Right ventricle myocardium inferior (tissue), 1 donor: ENCODE measurements at regions of chr10 and their contacts with region 1.

Region 1: GRCh38 chr10:68901104-68901927 is at the start of gene DDX50:
- DNase-seq: peak; percentile 97
- ATAC-seq: peak; percentile 99
- total RNA-seq, gene DDX50: 21.5 TPM

Region 2: DNA sequence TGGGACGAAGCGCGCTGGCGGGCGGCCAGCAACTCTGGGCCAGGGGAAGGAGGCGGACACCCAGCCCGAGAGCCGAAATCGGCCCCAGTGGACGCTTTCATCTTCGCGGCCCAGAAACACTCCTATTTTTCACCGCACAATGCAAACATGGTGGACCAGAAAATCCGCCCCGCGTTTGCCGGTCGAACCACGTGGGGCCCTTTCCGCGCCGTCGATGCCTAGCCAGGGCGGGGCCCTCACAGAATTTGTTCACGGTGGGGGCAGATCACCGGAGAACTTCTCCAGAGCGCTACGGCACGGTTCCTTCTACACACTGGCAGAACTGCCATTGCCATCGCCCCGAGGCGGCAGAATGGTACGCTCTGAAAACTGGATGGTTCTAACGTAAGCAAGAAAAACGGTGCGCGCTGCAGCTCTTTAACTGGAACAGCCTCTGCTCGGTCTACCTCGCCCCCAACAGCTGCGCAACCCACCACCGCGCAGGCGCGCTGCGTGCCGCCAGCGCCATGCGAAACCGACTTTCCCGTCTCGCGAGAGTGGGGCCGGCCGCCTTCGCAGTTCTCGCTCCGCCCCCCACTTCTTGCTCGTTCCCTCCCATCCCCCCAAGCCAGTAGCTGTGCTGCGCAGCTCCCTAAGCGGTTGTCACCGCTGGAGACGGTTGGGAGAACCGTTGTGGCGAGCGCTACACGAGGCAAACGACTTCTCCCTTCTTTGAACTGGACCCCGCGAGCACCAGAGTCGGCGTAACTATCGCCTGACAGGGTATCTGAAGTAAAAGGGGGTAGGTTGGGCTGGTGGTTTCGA is 569.7 kb before region 1 on chr10 and contains the start of gene HNRNPH3:
- intact Hi-C with region 1: loop called (anchors 10 kb)
- DNase-seq: peak; percentile 98
- ATAC-seq: peak; percentile 93
- total RNA-seq, gene HNRNPH3: 123 TPM

Region 3: GRCh38 chr10:68550747-68551411 is 350.4 kb before region 1 on chr10:
- intact Hi-C with region 1: loop called (anchors 10 kb)
- DNase-seq: no peak
- ATAC-seq: peak; percentile 83

Region 4: GRCh38 chr10:68720793-68721672 is 180.3 kb before region 1 on chr10 and contains the start of gene CCAR1:
- intact Hi-C with region 1: loop called (anchors 2 kb)
- DNase-seq: peak; percentile 99
- ATAC-seq: peak; percentile 99
- total RNA-seq, gene CCAR1: 32.0 TPM

Region 5: DNA sequence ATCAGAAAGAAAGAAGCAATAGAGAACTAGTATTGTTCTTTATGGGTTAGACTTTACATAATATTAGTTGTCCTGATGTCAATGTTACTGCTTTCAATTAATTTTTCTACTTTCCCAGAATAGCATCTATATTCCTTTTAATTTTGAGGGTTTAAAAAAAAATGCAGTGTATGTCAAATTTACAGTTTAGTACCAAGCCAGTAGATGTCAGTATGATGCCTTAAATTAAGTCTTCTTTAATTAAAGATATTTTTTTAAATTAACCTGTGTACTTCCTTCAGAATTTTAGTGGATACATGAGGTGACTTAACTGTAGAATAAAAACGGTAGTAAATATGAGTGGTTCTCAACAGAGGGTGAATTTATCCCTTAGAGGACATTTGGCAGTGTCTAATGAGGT is 109.2 kb before region 1 on chr10:
- intact Hi-C with region 1: loop called (anchors 5 kb)
- DNase-seq: no peak
- ATAC-seq: no peak